Activated CD4-positive, alpha-beta memory T cell treated with anti-CD3 and anti-CD28 coated beads for 36 hours (primary cell): ENCODE measurements at regions of chr2 and their contacts with region 1.

Region 1: DNA sequence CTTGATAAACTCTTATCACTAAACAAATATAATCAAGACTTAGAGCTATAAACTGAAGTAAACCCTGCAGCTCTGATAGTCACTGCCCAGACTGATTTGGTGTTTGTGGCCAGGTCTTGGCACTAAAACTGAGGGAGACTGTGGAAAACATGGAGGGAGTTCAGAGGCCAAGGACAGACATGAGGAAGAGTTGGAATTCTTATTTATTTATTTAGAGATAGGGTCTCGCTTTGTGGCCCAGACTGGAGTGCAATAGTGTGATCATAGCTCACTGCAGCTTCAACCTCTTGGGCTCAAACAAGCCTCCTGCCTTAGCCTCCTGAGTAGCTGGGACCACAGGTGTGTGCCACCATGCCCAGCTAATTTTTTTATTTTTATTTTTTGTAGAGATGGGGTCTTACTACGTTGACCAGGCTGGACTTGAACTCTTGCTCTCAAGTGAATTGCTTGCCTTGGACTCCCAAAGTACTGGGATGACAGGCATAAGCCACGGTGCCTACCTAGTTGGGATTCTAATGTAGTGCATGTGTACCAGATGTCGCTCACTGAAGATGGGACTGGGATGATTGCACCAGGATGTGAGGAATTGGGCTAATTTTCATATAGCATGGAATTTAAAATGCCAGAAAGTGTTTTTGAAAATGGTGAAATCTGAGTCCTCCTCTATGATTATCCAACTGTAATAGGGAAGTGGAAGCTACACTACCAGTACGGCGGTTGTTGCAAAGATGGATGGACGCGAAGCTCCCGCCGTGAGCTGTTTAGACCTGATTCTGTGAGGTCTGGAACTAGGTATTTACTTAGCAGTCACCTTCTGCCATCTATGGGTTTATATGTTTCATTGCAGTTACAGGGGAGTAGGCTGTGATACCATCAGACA is 52.7 kb upstream of the CTLA4 start:
- DNase-seq: peak; percentile 69
- H3K4me3 Mint-ChIP-seq: peak overlapping the region; percentile 60
- H3K27ac Mint-ChIP-seq: peak overlapping the region; percentile 58
- H3K4me1 Mint-ChIP-seq: peaks cover 56% of the 10 kb centered on the region
- H3K27me3 Mint-ChIP-seq: no peaks in the 10 kb centered on the region

Region 2: GRCh38 chr2:202574541-202574940 is 1240.4 kb before region 1 on chr2:
- CTCF ChIA-PET with region 1: interaction called, 4 read pairs
- POLR2A ChIA-PET with region 1: no interaction called
- intact Hi-C with region 1: loop called (anchors 5 kb)
- DNase-seq: no peak
- H3K4me3 Mint-ChIP-seq: no peak overlapping the region
- H3K27ac Mint-ChIP-seq: no peak overlapping the region
- H3K4me1 Mint-ChIP-seq: no peaks in the 10 kb centered on the region
- H3K27me3 Mint-ChIP-seq: no peaks in the 10 kb centered on the region

Region 3: GRCh38 chr2:203225423-203226039 is 589.4 kb before region 1 on chr2:
- CTCF ChIA-PET with region 1: interaction called, 13 read pairs
- POLR2A ChIA-PET with region 1: no interaction called
- intact Hi-C with region 1: no loop called
- DNase-seq: peak; percentile 38
- H3K4me3 Mint-ChIP-seq: no peak overlapping the region
- H3K27ac Mint-ChIP-seq: no peak overlapping the region
- H3K4me1 Mint-ChIP-seq: no peaks in the 10 kb centered on the region
- H3K27me3 Mint-ChIP-seq: no peaks in the 10 kb centered on the region

Region 4: DNA sequence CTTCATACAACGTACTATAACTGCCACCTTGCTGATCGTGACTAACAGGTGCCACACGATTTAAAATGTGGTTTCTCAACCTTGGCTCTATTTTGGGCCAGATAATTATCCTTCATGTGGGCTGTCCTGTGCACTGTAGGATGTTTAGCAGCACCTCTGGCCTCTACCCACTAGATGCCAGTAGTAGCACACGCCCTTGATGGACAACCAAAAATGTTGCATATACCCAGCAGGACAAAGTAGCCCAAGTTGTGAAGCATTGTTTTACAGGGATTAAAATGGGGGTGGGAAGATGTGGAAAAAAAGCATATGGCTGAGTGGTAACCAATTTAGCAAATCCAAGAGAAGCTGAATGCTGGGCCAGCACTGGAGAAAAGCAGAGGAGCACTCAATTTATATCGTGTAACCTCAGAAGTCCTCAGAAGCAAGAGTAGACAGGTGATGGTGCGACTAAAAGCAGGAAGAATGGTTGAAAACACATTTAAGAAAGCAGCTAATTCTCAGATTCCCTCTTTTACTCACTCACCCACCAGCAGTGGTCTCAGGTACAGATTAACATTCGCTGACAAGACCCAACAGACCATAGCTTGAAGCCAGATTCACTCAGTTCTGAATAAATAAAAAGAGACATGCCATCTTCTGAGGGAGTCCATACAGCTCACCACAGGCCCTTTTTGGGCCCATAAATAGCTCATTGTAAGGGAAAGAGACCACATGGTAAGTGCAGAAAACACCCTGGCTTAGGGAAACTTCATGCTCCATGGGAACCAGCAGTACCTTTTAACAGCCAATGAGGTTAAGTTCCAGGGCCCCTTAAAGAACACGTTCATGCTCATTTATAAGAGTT is 330.4 kb before region 1 on chr2:
- CTCF ChIA-PET with region 1: interaction called, 75 read pairs
- POLR2A ChIA-PET with region 1: no interaction called
- intact Hi-C with region 1: loop called (anchors 1 kb)
- DNase-seq: peak; percentile 59
- H3K4me3 Mint-ChIP-seq: no peak overlapping the region
- H3K27ac Mint-ChIP-seq: peak overlapping the region; percentile 1
- H3K4me1 Mint-ChIP-seq: peaks cover 10% of the 10 kb centered on the region
- H3K27me3 Mint-ChIP-seq: no peaks in the 10 kb centered on the region

Region 5: DNA sequence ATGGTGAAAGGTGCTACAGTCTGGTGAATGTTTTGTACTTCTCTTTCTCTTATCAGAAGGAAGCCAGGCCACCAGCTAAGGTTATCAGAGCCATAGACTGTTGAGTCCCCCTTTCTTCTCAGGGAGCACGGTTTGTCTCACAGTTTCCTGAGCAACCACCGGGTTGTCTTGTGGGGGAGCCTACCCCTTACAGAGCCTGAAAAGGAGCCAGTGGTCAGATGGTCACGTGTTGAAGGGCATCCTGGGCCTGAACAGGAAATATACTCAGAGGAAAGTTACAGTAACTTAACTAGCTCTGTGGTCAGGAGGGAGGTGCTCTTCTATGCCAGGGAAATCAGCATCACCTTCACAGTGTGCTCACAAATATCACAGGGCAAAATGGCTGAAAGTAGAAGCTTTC is 96.8 kb before region 1 on chr2:
- CTCF ChIA-PET with region 1: interaction called, 6 read pairs
- POLR2A ChIA-PET with region 1: interaction called, 16 read pairs
- intact Hi-C with region 1: no loop called
- DNase-seq: peak; percentile 85
- H3K4me3 Mint-ChIP-seq: peak overlapping the region; percentile 69
- H3K27ac Mint-ChIP-seq: peak overlapping the region; percentile 94
- H3K4me1 Mint-ChIP-seq: peaks cover 96% of the 10 kb centered on the region
- H3K27me3 Mint-ChIP-seq: no peaks in the 10 kb centered on the region

Region 6: GRCh38 chr2:203759690-203760365 is 55.1 kb before region 1 on chr2:
- CTCF ChIA-PET with region 1: interaction called, 4 read pairs
- POLR2A ChIA-PET with region 1: interaction called, 6 read pairs
- intact Hi-C with region 1: loop called (anchors 1 kb)
- DNase-seq: no peak
- H3K4me3 Mint-ChIP-seq: no peak overlapping the region
- H3K27ac Mint-ChIP-seq: no peak overlapping the region
- H3K4me1 Mint-ChIP-seq: peaks cover 63% of the 10 kb centered on the region
- H3K27me3 Mint-ChIP-seq: no peaks in the 10 kb centered on the region

Region 7: DNA sequence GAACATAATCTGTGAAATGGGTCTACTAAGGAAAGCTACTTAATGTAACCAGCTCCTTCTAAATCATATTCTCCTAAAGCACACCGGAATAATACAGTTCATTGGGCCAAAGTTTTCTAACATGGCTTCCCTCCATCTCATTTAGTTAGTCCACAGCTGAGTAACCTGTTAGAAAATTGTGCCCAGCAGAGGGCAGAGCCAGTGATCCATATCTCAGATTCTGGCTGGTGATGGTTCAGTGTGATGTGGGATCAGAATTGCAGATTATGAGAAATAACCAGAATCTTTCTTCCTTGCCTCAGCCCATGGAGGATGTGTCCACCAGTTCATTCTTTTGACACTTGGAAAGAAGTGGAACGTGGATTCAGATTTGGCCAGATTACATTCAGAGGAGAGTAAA is 43.3 kb after region 1 on chr2:
- CTCF ChIA-PET with region 1: interaction called, 12 read pairs
- POLR2A ChIA-PET with region 1: interaction called, 3 read pairs
- intact Hi-C with region 1: loop called (anchors 5 kb)
- DNase-seq: peak; percentile 66
- H3K4me3 Mint-ChIP-seq: peak overlapping the region; percentile 25
- H3K27ac Mint-ChIP-seq: peak overlapping the region; percentile 81
- H3K4me1 Mint-ChIP-seq: peaks cover 84% of the 10 kb centered on the region
- H3K27me3 Mint-ChIP-seq: no peaks in the 10 kb centered on the region